A549 (cell line): ENCODE measurements at regions of chr16 and their contacts with region 1.

Region 1: DNA sequence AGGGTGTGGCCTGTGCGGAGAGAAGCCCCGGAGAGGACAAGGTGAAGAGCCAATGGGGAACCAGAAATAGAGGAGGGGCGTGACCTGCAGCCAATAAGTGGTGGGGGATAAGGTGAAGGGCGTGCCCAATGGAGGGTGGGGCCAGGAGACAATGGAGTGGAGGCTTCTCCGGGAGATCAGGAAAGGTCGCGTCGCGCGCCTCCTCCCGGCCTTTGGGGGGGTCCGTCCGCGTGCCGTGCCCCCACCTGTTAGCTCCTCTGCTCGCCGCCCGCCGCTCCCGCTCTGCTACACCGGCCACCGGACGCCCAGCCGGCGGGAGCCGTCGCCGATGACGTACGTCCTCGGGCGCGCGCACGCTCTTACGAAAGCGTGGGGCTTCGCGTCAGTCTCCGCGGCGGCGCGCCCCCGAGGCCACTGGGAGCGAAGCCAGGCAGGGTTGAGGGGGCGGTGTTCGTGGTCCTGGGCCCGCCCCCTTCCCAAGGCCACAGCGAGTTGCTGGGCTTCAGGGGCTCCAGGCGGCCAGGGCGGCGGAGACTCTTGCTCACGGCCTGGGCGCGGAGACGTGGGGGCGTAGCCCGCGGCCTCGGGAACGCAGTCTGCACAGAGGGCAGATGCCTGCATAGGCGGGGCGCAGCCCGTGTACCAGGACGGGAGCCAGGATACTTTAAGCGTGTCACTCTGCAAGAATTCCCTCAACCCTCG is at the start of gene MATCAP1:
- DNase-seq: peak; percentile 98 to 99
- ATAC-seq: peak; percentile 72 to 87
- H3K4me3 ChIP-seq: peak within 1 kb of the TSS; percentile 66
- H3K27ac ChIP-seq: peak within 1 kb of the TSS; percentile 93 to 97
- H3K4me1 ChIP-seq: peaks cover 34% of the 10 kb centered on the region
- CTCF ChIP-seq: no peak
- EP300 ChIP-seq: no peak
- POLR2A ChIP-seq: peak; percentile 45
- RAD21 ChIP-seq: no peak
- polyA plus RNA-seq, gene MATCAP1: 7.2 and 7.5 TPM in 2 replicates

Region 2: GRCh38 chr16:66970775-66971725 is 212.7 kb before region 1 on chr16:
- CTCF ChIA-PET with region 1: interaction called, 93 read pairs
- POLR2A ChIA-PET with region 1: no interaction called
- DNase-seq: peak in 1 of 2 experiments; percentile 39
- ATAC-seq: peak; percentile 38 to 52; a peak in 5 of 6 replicates
- H3K4me3 ChIP-seq: no peak overlapping the region
- H3K27ac ChIP-seq: peak overlapping the region; percentile 25 to 35; a peak in 3 of 6 replicates
- H3K4me1 ChIP-seq: peaks cover 13% of the 10 kb centered on the region
- CTCF ChIP-seq: no peak
- EP300 ChIP-seq: no peak; a peak in 1 of 5 replicates
- POLR2A ChIP-seq: no peak
- RAD21 ChIP-seq: no peak

Region 3: GRCh38 chr16:66988197-66988788 is 195.5 kb before region 1 on chr16 and contains the start of gene CES4A:
- CTCF ChIA-PET with region 1: interaction called, 10 read pairs
- POLR2A ChIA-PET with region 1: no interaction called
- DNase-seq: no peak
- ATAC-seq: peak; percentile 57 to 60; a peak in 5 of 6 replicates
- H3K4me3 ChIP-seq: no peak within 1 kb of the TSS
- H3K27ac ChIP-seq: peak within 1 kb of the TSS; percentile 38 to 44; a peak in 2 of 6 replicates
- H3K4me1 ChIP-seq: peaks cover 4% of the 10 kb centered on the region; the same call in 1 of the 3 replicates
- CTCF ChIP-seq: no peak
- EP300 ChIP-seq: no peak
- POLR2A ChIP-seq: no peak
- RAD21 ChIP-seq: no peak
- polyA plus RNA-seq, gene CES4A: 3.5 and 4.4 TPM in 2 replicates